CD4-positive, alpha-beta memory T cell (primary cell): ENCODE measurements at regions of chr15 and their contacts with region 1.

Region 1: GRCh38 chr15:78422571-78423340 is 15.3 kb upstream of the IREB2 start:
- DNase-seq: peak; percentile 54 to 62 (median 61)
- H3K4me3 ChIP-seq: no peak overlapping the region
- H3K4me3 Mint-ChIP-seq: peak overlapping the region in 1 of 8 donors; percentile 27
- H3K27ac ChIP-seq: no peak overlapping the region
- H3K27ac Mint-ChIP-seq: peak overlapping the region in 1 of 7 donors; percentile 3
- H3K4me1 ChIP-seq: peaks cover 17% of the 10 kb centered on the region
- H3K4me1 Mint-ChIP-seq: peaks cover 21 to 32% (median 22%) of the 10 kb centered on the region in 4 donors
- H3K27me3 ChIP-seq: no peaks in the 10 kb centered on the region
- H3K27me3 Mint-ChIP-seq: peaks cover 0 to 5% of the 10 kb centered on the region in 2 donors

Region 2: GRCh38 chr15:77966540-77967290 is 456.0 kb before region 1 on chr15:
- CTCF ChIA-PET with region 1: no interaction called
- POLR2A ChIA-PET with region 1: no interaction called
- intact Hi-C with region 1: loop called (anchors 10 kb)
- DNase-seq: peak in 4 of 5 donors; percentile 39 to 40 (median 39)
- H3K4me3 ChIP-seq: no peak overlapping the region
- H3K4me3 Mint-ChIP-seq: no peak overlapping the region
- H3K27ac ChIP-seq: no peak overlapping the region
- H3K27ac Mint-ChIP-seq: no peak overlapping the region
- H3K4me1 ChIP-seq: no peaks in the 10 kb centered on the region
- H3K4me1 Mint-ChIP-seq: peaks cover 0 to 4% (median 0%) of the 10 kb centered on the region in 4 donors
- H3K27me3 ChIP-seq: no peaks in the 10 kb centered on the region
- H3K27me3 Mint-ChIP-seq: no peaks in the 10 kb centered on the region

Region 3: DNA sequence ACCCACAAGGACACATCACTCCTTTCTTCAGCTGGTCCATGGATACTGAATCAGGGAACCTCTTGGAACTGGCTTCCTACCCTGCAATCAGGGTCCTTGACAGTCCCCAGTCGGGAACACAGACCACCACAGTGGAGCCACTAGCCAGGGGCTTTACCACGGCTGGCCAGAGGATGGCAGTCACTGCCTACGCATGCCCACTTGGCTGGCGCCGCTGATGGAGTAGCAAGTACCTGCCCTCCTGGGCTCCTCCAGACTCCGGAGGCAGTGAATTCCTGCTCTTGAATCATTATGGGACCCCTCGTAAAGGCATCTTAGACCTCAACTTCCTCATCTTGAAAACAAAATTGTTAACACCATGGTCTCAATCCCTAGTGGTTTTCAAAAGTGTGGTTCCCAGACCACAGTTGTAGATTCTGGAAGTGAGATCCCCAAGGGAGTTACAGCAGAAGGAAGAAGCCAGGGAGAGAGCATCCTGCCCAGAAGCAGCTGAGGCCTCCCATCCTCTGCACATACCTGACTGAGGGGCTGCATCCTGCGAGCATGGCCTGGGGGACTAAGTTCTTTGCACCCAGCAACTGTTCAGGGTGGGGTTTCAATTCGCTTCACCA is 114.2 kb before region 1 on chr15:
- CTCF ChIA-PET with region 1: interaction called, 5 read pairs
- POLR2A ChIA-PET with region 1: no interaction called
- intact Hi-C with region 1: loop called (anchors 1 kb)
- DNase-seq: peak in 4 of 5 donors; percentile 6 to 12 (median 10)
- H3K4me3 ChIP-seq: no peak overlapping the region
- H3K4me3 Mint-ChIP-seq: no peak overlapping the region
- H3K27ac ChIP-seq: no peak overlapping the region
- H3K27ac Mint-ChIP-seq: no peak overlapping the region
- H3K4me1 ChIP-seq: no peaks in the 10 kb centered on the region
- H3K4me1 Mint-ChIP-seq: no peaks in the 10 kb centered on the region
- H3K27me3 ChIP-seq: no peaks in the 10 kb centered on the region
- H3K27me3 Mint-ChIP-seq: peaks cover 10 to 13% of the 10 kb centered on the region in 2 donors